Transverse colon (tissue), 4 donors: ENCODE measurements at regions of chr12 and their contacts with region 1.

Region 1: GRCh38 chr12:108950991-108951739 is 69.7 kb downstream of the SVOP start:
- DNase-seq: peak; percentile 81
- H3K4me3 ChIP-seq: no peak overlapping the region
- H3K27ac ChIP-seq: no peak overlapping the region
- H3K4me1 ChIP-seq: peaks cover 0 to 7% (median 2%) of the 10 kb centered on the region in 4 donors
- H3K27me3 ChIP-seq: no peaks in the 10 kb centered on the region
- CTCF ChIP-seq: peak; percentile 86 to 94 (median 92)
- EP300 ChIP-seq: no peak
- POLR2A ChIP-seq: no peak

Region 2: GRCh38 chr12:108618079-108618952 is 332.8 kb before region 1 on chr12:
- in situ Hi-C with region 1: no loop called
- intact Hi-C with region 1: loop called (anchors 10 kb)
- DNase-seq: peak; percentile 84
- H3K4me3 ChIP-seq: no peak overlapping the region
- H3K27ac ChIP-seq: peak overlapping the region in 1 of 4 donors; percentile 40
- H3K4me1 ChIP-seq: peaks cover 0 to 23% (median 0%) of the 10 kb centered on the region in 4 donors
- H3K27me3 ChIP-seq: no peaks in the 10 kb centered on the region
- CTCF ChIP-seq: peak; percentile 91 to 99 (median 97)
- EP300 ChIP-seq: no peak
- POLR2A ChIP-seq: no peak

Region 3: DNA sequence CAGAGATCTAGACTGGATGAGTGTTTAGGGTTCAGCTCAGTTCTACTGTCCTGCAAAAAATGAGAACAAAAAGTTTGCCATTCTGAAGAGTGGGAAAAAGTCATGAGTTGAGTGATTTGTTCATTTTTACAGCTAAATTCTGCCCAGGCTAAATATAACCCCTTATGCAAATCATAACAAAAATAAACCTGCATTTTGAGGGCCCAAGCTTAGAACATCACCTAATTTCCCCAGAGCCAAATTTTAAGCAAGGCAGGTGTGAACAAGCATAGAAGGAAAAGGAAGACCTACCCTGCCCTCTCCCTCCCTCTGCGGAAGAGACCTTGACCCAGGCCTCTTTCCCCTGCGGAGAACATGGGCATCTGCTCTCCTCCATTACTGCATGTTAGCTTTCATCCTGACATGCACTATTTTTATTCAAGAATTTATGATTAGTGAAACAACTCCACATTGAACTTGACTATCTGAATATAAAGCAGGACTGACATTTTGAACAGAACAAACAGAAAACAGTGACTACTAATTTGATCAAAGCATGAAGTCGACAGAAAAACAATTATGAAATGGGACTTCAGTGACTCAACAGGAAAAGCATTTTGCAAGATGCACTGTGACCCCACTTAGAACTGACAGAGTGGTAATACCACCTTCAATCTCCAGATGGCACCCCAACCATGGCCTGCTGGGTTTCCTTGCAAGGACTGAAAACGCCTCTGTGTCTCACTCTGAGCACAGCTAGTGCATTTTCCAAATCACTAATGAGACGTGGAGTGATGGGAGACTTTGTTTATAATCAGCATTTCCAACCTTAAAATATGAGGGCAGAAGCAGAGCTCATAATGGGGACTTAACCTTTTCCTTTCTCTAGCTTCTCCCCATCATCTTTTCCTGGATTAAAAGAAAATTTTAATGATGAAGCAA is 286.6 kb before region 1 on chr12:
- in situ Hi-C with region 1: loop called in 1 of 4 experiments (anchors 25 kb)
- intact Hi-C with region 1: no loop called
- DNase-seq: peak; percentile 89
- H3K4me3 ChIP-seq: no peak overlapping the region
- H3K27ac ChIP-seq: peak overlapping the region; percentile 82 to 93 (median 88)
- H3K4me1 ChIP-seq: peaks cover 26 to 62% (median 50%) of the 10 kb centered on the region in 4 donors
- H3K27me3 ChIP-seq: no peaks in the 10 kb centered on the region
- CTCF ChIP-seq: peak; percentile 82 to 98 (median 90)
- EP300 ChIP-seq: no peak
- POLR2A ChIP-seq: no peak

Region 4: GRCh38 chr12:108838194-108839017 is 112.8 kb before region 1 on chr12:
- in situ Hi-C with region 1: no loop called
- intact Hi-C with region 1: no loop called
- DNase-seq: peak; percentile 78
- H3K4me3 ChIP-seq: no peak overlapping the region
- H3K27ac ChIP-seq: peak overlapping the region; percentile 83 to 88 (median 85)
- H3K4me1 ChIP-seq: peaks cover 20 to 48% (median 32%) of the 10 kb centered on the region in 4 donors
- H3K27me3 ChIP-seq: no peaks in the 10 kb centered on the region
- CTCF ChIP-seq: no peak
- EP300 ChIP-seq: peak; percentile 45
- POLR2A ChIP-seq: peak; percentile 47

Region 5: GRCh38 chr12:108884116-108885012 is 66.8 kb before region 1 on chr12:
- in situ Hi-C with region 1: loop called in 1 of 4 experiments (anchors 10 kb)
- intact Hi-C with region 1: no loop called
- DNase-seq: peak; percentile 67
- H3K4me3 ChIP-seq: no peak overlapping the region
- H3K27ac ChIP-seq: no peak overlapping the region
- H3K4me1 ChIP-seq: peaks cover 0 to 7% (median 2%) of the 10 kb centered on the region in 4 donors
- H3K27me3 ChIP-seq: no peaks in the 10 kb centered on the region
- CTCF ChIP-seq: peak; percentile 48 to 61 (median 58)
- EP300 ChIP-seq: no peak
- POLR2A ChIP-seq: no peak

Region 6: DNA sequence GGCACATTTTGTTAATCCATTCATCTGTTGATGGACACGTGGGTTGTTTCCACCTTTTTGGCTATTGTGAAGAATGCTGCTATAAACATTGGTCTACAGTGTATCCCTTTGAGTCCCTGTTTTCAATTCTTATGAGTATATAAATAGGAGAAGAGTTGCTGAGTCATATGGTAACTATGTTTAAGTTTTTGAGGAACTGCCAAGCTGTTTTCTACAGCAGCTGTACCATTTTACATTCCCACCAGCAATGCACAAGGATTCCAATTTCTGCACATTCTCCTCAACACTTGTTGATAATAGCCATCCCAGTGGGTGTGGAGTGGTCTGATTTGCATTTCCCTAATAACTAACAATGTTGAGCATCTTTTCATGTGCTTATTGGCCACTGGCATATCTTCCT is 76.6 kb after region 1 on chr12:
- in situ Hi-C with region 1: no loop called
- intact Hi-C with region 1: no loop called
- DNase-seq: no peak
- H3K4me3 ChIP-seq: no peak overlapping the region
- H3K27ac ChIP-seq: no peak overlapping the region
- H3K4me1 ChIP-seq: no peaks in the 10 kb centered on the region
- H3K27me3 ChIP-seq: peaks cover 5% of the 10 kb centered on the region
- CTCF ChIP-seq: no peak
- EP300 ChIP-seq: no peak
- POLR2A ChIP-seq: no peak

Region 7: DNA sequence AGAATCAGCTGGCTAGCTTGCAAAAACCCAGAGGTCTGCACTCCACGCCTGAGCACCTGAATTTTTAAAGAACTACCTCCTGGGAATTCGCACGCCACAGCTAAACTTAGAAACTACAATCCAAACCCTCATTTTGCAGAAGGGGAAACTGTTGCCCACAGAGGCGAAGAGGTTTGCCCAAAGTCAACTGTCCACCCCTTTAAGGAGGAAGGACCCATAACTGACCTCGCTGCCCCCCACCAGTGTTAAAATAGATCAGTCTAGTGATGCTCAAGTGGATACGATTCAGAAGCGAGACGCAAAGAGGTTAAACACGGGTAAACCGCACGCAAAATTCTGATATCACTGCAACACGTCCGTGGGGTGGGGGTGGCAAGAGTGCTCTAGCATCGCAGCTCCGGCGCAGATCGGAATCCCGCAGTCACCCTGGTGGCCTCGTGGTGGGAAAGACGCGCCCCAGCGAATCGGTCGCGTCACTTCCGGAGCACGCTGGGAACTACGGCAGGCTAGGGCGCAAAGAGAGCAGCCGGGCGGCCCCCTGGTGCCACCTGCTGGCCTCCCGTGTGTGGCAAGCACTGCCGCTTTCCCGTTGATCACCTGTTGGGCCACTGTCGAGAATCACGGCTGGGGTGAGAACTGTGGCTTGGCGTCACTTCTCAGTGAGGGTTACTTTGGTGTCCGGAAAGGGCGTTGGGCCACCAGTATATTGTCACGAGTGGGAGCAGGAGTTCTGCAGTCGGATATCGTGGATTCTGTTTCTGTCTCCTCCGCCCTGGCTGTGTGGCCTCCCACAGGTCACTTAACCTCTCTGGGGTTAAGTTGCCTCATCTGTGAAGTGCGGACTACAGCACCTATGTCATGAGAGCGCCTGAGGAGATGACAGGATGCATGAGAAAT is 142.1 kb after region 1 on chr12 and contains the start of gene ALKBH2:
- in situ Hi-C with region 1: loop called in 1 of 4 experiments (anchors 10 kb)
- intact Hi-C with region 1: no loop called
- DNase-seq: peak; percentile 95
- H3K4me3 ChIP-seq: peak within 1 kb of the TSS; percentile 30 to 54 (median 36)
- H3K27ac ChIP-seq: peak within 1 kb of the TSS; percentile 73 to 83 (median 75)
- H3K4me1 ChIP-seq: peaks cover 15 to 36% (median 22%) of the 10 kb centered on the region in 4 donors
- H3K27me3 ChIP-seq: no peaks in the 10 kb centered on the region
- CTCF ChIP-seq: peak; percentile 96 to 99 (median 98)
- EP300 ChIP-seq: peak; percentile 82
- POLR2A ChIP-seq: peak; percentile 25
- total RNA-seq, gene ALKBH2: 3.4 to 11.1 (median 7.1) TPM in 3 of 4 donors, not detected in the other